ENCODE measurements at regions of chr12 and their contacts with region 1.

Region 1: GRCh38 chr12:10673660-10674384 is at the start of gene STYK1:
- DNase-seq: peak; percentile 40 to 68 (median 59)
- ATAC-seq: peak; percentile 90
- H3K4me3 ChIP-seq: peak within 1 kb of the TSS; percentile 45
- H3K4me3 Mint-ChIP-seq: peak within 1 kb of the TSS; percentile 66 to 85 (median 80)
- H3K27ac ChIP-seq: no peak within 1 kb of the TSS
- H3K27ac Mint-ChIP-seq: peak within 1 kb of the TSS in 5 of 9 donors; percentile 22 to 83 (median 60)
- H3K4me1 ChIP-seq: peaks cover 8 to 18% of the 10 kb centered on the region in 2 donors
- H3K4me1 Mint-ChIP-seq: peaks cover 20 to 64% (median 32%) of the 10 kb centered on the region in 7 donors
- H3K27me3 ChIP-seq: peaks cover 0 to 8% of the 10 kb centered on the region in 2 donors
- H3K27me3 Mint-ChIP-seq: peaks cover 30 to 60% (median 45%) of the 10 kb centered on the region in 5 donors
- total RNA-seq, gene STYK1: 0.24 to 1.6 (median 0.34) TPM in 3 of 5 experiments, not detected in the others

Region 2: DNA sequence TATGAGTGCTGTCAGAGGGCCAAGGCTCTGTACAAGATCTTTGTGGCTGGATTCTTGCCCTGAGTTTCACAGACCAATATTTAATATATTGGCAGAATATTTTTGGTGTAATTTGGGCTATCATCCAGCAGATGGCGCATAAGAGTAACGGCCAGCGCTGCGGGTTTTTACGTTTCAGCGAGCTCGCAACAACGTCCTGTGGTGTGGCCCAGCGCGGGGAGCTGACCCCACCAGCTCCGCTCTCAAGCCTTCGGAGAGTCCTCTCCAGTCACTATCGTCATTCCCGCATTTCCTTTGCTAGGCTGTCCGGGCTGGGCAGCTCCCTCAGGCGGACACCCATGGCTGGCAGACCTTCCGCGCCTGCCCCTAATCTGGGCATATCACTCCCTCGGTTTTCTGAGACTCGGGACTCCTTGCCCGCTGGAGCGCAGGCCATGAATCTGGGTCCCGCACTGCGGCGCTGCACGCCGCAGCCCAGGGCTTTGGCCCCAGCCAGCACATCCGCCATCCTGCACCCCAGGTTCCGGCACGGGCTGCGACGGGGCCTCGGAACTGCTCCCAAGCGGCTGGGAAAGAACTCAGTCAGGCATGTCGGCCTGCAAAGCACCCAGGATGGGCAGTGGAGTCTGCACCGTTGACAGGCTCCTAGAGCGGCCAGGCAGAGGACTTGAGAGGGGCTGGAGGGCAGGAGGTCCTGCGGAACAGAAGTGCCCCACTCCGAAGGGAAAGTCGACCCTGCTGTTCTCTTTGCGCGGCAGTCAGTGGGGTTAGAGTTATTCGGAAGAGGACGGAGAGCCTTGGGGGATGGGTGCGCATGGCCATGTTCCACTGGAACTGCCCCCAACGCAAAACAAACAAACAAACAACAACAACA is 520.3 kb before region 1 on chr12:
- CTCF ChIA-PET with region 1: no interaction called
- POLR2A ChIA-PET with region 1: no interaction called
- intact Hi-C with region 1: loop called (anchors 1 kb)
- DNase-seq: peak; percentile 31 to 71 (median 58)
- ATAC-seq: peak; percentile 93
- H3K4me3 ChIP-seq: peak overlapping the region; percentile 83
- H3K4me3 Mint-ChIP-seq: peak overlapping the region; percentile 89 to 96 (median 93)
- H3K27ac ChIP-seq: peak overlapping the region; percentile 55
- H3K27ac Mint-ChIP-seq: peak overlapping the region in 7 of 9 donors; percentile 58 to 91 (median 82)
- H3K4me1 ChIP-seq: peaks cover 6 to 7% of the 10 kb centered on the region in 2 donors
- H3K4me1 Mint-ChIP-seq: peaks cover 5 to 15% (median 11%) of the 10 kb centered on the region in 7 donors
- H3K27me3 ChIP-seq: peaks cover 0 to 3% of the 10 kb centered on the region in 2 donors
- H3K27me3 Mint-ChIP-seq: peaks cover 0 to 66% (median 0%) of the 10 kb centered on the region in 5 donors

Region 3: GRCh38 chr12:10331642-10332239 is 342.1 kb before region 1 on chr12:
- CTCF ChIA-PET with region 1: no interaction called
- POLR2A ChIA-PET with region 1: no interaction called
- intact Hi-C with region 1: loop called (anchors 1 to 2 kb)
- DNase-seq: peak in 7 of 9 donors; percentile 9 to 51 (median 20)
- ATAC-seq: peak; percentile 63
- H3K4me3 ChIP-seq: no peak overlapping the region
- H3K4me3 Mint-ChIP-seq: no peak overlapping the region
- H3K27ac ChIP-seq: no peak overlapping the region
- H3K27ac Mint-ChIP-seq: peak overlapping the region in 1 of 9 donors; percentile 57
- H3K4me1 ChIP-seq: no peaks in the 10 kb centered on the region
- H3K4me1 Mint-ChIP-seq: peaks cover 0 to 6% (median 0%) of the 10 kb centered on the region in 7 donors
- H3K27me3 ChIP-seq: no peaks in the 10 kb centered on the region
- H3K27me3 Mint-ChIP-seq: peaks cover 0 to 6% (median 0%) of the 10 kb centered on the region in 5 donors

Region 4: GRCh38 chr12:10613349-10614055 is 60.3 kb before region 1 on chr12 and contains the start of gene MAGOHB:
- CTCF ChIA-PET with region 1: no interaction called
- POLR2A ChIA-PET with region 1: no interaction called
- intact Hi-C with region 1: loop called (anchors 1 to 2 kb)
- DNase-seq: peak; percentile 94 to 100 (median 97)
- ATAC-seq: peak; percentile 96
- H3K4me3 ChIP-seq: peak within 1 kb of the TSS; percentile 74
- H3K4me3 Mint-ChIP-seq: peak within 1 kb of the TSS; percentile 93 to 100 (median 98)
- H3K27ac ChIP-seq: peak within 1 kb of the TSS; percentile 93
- H3K27ac Mint-ChIP-seq: peak within 1 kb of the TSS; percentile 97 to 100 (median 100)
- H3K4me1 ChIP-seq: peaks cover 4 to 11% of the 10 kb centered on the region in 2 donors
- H3K4me1 Mint-ChIP-seq: peaks cover 12 to 38% (median 33%) of the 10 kb centered on the region in 7 donors
- H3K27me3 ChIP-seq: no peaks in the 10 kb centered on the region
- H3K27me3 Mint-ChIP-seq: peaks cover 0 to 26% (median 7%) of the 10 kb centered on the region in 5 donors
- total RNA-seq, gene MAGOHB: 12.1 to 43.1 (median 24.8) TPM

Region 5: GRCh38 chr12:10721651-10722501 is 48.1 kb after region 1 on chr12:
- CTCF ChIA-PET with region 1: no interaction called
- POLR2A ChIA-PET with region 1: no interaction called
- intact Hi-C with region 1: loop called in 1 of 2 experiments (anchors 5 kb)
- DNase-seq: peak; percentile 45 to 84 (median 74)
- ATAC-seq: peak; percentile 83
- H3K4me3 ChIP-seq: peak overlapping the region; percentile 83
- H3K4me3 Mint-ChIP-seq: peak overlapping the region; percentile 80 to 96 (median 93)
- H3K27ac ChIP-seq: peak overlapping the region; percentile 61
- H3K27ac Mint-ChIP-seq: peak overlapping the region; percentile 48 to 96 (median 87)
- H3K4me1 ChIP-seq: peaks cover 9 to 19% of the 10 kb centered on the region in 2 donors
- H3K4me1 Mint-ChIP-seq: peaks cover 14 to 43% (median 21%) of the 10 kb centered on the region in 7 donors
- H3K27me3 ChIP-seq: peaks cover 0 to 4% of the 10 kb centered on the region in 2 donors
- H3K27me3 Mint-ChIP-seq: peaks cover 20 to 60% (median 44%) of the 10 kb centered on the region in 5 donors

Measured in naive thymus-derived CD4-positive, alpha-beta T cell (primary cell).